PC-3 (cell line): ENCODE measurements at regions of chr2 and their contacts with region 1.

Region 1: GRCh38 chr2:165874445-165875039 is 79.0 kb downstream of the TTC21B start:
- DNase-seq: peak; percentile 93
- ATAC-seq: peak; percentile 94
- H3K4me3 ChIP-seq: peak overlapping the region; percentile 31
- H3K27ac ChIP-seq: no peak overlapping the region
- H3K4me1 ChIP-seq: peaks cover 10% of the 10 kb centered on the region
- H3K27me3 ChIP-seq: no peaks in the 10 kb centered on the region
- CTCF ChIP-seq: peak; percentile 96

Region 2: GRCh38 chr2:165401285-165401852 is 473.2 kb before region 1 on chr2:
- CTCF ChIA-PET with region 1: interaction called, 9 read pairs
- POLR2A ChIA-PET with region 1: no interaction called
- intact Hi-C with region 1: loop called (anchors 1 kb)
- DNase-seq: peak; percentile 92
- ATAC-seq: peak; percentile 23
- H3K4me3 ChIP-seq: no peak overlapping the region
- H3K27ac ChIP-seq: no peak overlapping the region
- H3K4me1 ChIP-seq: peaks cover 23% of the 10 kb centered on the region
- H3K27me3 ChIP-seq: no peaks in the 10 kb centered on the region
- CTCF ChIP-seq: peak; percentile 97

Region 3: DNA sequence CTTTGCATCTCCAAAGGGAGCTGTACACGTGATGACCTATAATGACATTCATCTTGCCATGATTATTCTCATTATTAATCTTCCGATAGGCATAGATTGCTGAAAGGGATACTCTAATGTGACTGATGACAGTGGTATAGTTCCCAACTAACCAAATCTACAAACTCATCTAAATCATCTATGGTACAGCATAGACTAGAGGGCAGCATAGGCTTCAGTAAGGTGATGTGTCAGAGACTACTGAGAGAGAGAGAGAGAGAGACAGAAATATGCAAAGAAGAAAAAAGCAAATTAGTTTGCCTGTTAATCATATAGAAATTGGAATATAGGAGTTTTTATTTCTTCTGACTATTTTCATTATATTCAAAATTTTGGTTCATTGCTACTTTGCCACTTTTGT is 315.7 kb before region 1 on chr2:
- CTCF ChIA-PET with region 1: interaction called, 3 read pairs
- POLR2A ChIA-PET with region 1: no interaction called
- intact Hi-C with region 1: loop called (anchors 5 kb)
- DNase-seq: peak; percentile 33
- ATAC-seq: peak; percentile 79
- H3K4me3 ChIP-seq: no peak overlapping the region
- H3K27ac ChIP-seq: no peak overlapping the region
- H3K4me1 ChIP-seq: no peaks in the 10 kb centered on the region
- H3K27me3 ChIP-seq: no peaks in the 10 kb centered on the region
- CTCF ChIP-seq: peak; percentile 60

Region 4: DNA sequence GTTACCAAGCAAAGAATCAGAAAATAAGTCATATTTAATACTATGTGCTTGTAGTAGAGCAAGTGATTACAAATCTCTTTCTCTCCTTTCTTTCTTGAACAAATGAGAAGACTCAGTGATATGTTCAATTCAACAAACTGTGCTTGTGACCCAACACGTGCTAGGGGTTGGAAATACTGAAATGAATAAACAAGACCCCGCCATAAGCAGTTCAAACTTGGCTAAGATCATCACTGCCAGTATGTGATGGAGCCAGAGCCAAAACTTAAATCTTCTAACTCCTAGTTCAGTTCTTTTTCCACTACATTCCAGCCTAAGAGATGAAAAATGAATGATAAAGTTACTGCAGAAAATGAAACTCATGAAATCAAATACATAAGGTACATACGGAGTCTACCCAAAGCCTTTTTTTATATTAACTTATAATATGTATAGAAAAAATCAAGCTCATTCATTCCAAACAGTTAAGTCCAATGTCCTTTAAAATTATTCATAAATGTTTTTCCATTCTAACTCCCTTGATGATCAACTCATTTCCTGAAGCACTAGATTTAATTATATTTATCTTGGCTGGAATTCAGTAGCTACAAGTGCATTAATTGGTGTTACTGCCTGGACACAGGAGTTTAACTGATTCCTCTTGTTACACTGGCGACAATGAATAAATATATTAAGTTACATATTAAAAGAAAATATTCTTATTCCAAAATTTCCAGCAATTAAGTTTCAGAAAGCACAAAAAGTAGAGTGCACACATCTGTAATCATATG is 116.5 kb before region 1 on chr2:
- CTCF ChIA-PET with region 1: interaction called, 9 read pairs
- POLR2A ChIA-PET with region 1: no interaction called
- intact Hi-C with region 1: loop called (anchors 2 kb)
- DNase-seq: peak; percentile 28
- ATAC-seq: peak; percentile 85
- H3K4me3 ChIP-seq: no peak overlapping the region
- H3K27ac ChIP-seq: no peak overlapping the region
- H3K4me1 ChIP-seq: no peaks in the 10 kb centered on the region
- H3K27me3 ChIP-seq: no peaks in the 10 kb centered on the region
- CTCF ChIP-seq: no peak

Region 5: DNA sequence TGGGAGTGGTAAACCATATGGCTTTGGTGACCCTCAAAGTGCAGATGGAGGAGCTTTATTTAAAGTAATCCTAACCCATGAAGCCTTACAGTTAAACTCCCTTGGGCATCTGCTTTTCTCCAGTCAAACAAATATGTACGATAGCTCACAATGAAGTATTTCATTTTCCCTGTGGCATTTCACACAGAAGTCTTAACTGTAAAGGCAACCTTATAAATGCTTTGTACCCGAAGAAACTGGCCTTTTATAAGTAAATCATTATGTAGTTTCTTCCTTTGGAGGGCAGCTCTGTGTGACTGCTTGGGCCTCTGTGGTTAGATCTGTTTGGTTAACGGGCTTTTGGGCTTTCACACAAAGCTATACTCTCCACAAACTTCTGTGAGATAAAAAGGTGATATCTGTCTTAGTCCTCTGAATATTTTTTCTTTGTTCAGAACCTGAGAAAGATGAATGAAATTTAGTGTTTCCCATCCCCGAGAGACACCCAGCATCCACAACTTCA is 206.6 kb after region 1 on chr2:
- CTCF ChIA-PET with region 1: no interaction called
- POLR2A ChIA-PET with region 1: no interaction called
- intact Hi-C with region 1: no loop called
- DNase-seq: no peak
- ATAC-seq: no peak
- H3K4me3 ChIP-seq: no peak overlapping the region
- H3K27ac ChIP-seq: no peak overlapping the region
- H3K4me1 ChIP-seq: no peaks in the 10 kb centered on the region
- H3K27me3 ChIP-seq: peaks cover 74% of the 10 kb centered on the region
- CTCF ChIP-seq: no peak

Region 6: GRCh38 chr2:166700079-166700478 is 825.5 kb after region 1 on chr2:
- CTCF ChIA-PET with region 1: interaction called, 3 read pairs
- POLR2A ChIA-PET with region 1: no interaction called
- intact Hi-C with region 1: loop called (anchors 10 kb)
- DNase-seq: peak; percentile 47
- ATAC-seq: peak; percentile 67
- H3K4me3 ChIP-seq: no peak overlapping the region
- H3K27ac ChIP-seq: no peak overlapping the region
- H3K4me1 ChIP-seq: no peaks in the 10 kb centered on the region
- H3K27me3 ChIP-seq: 0 out of 2 replicates have a peak, but pooled peaks cover 3% of the 10 kb centered on the region
- CTCF ChIP-seq: peak; percentile 69